CD8-positive, alpha-beta T cell (primary cell): ENCODE measurements at regions of chr7 and their contacts with region 1.

Region 1: DNA sequence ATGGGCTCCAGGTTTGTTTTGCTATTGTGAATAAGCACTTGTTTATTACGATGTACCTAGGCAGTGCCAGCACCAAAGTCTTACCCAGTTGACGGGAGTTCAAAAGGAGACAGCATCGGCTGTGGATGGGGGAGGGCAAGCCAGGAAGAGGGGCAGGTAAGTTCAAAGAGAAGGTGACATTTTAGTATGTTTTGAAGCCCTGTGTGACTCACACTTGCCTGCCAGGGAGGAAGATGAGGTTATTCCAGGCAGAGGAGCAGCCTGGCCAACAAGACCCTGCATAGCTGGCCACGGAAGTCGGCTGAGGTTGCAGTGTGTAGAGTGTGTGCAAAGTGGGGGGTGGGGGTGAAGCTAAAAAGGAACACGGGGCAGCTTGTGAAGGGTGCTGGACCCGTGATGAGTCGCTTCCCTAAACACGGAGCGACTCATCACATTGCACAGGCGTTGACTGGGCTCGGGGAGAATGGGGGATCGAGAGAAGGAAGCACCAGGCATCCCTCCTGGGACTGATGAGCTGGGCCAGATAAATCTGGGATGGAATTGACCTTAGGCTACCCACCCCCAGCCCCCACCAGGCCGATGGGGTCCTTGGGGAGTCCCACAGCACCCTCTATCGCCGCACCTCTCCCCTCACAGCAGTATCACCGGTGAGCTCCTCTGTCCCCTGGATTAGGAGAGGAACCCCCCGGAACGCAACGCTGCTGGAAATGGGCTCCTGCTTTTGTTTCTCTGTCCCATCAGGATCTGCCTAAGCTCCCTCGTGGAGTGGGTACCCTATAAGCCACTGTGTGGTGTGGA is 97.9 kb upstream of the IKZF1 start:
- DNase-seq: peak; percentile 46 to 89 (median 78)
- ATAC-seq: peak; percentile 74
- H3K4me3 ChIP-seq: peak overlapping the region in 1 of 2 experiments; percentile 12
- H3K4me3 Mint-ChIP-seq: peak overlapping the region; percentile 80
- H3K27ac ChIP-seq: peak overlapping the region; percentile 3 to 37
- H3K27ac Mint-ChIP-seq: peak overlapping the region; percentile 92
- H3K4me1 ChIP-seq: peaks cover 74% of the 10 kb centered on the region
- H3K4me1 Mint-ChIP-seq: peaks cover 76% of the 10 kb centered on the region
- H3K27me3 ChIP-seq: no peaks in the 10 kb centered on the region
- H3K27me3 Mint-ChIP-seq: no peaks in the 10 kb centered on the region
- CTCF ChIP-seq: no peak

Region 2: DNA sequence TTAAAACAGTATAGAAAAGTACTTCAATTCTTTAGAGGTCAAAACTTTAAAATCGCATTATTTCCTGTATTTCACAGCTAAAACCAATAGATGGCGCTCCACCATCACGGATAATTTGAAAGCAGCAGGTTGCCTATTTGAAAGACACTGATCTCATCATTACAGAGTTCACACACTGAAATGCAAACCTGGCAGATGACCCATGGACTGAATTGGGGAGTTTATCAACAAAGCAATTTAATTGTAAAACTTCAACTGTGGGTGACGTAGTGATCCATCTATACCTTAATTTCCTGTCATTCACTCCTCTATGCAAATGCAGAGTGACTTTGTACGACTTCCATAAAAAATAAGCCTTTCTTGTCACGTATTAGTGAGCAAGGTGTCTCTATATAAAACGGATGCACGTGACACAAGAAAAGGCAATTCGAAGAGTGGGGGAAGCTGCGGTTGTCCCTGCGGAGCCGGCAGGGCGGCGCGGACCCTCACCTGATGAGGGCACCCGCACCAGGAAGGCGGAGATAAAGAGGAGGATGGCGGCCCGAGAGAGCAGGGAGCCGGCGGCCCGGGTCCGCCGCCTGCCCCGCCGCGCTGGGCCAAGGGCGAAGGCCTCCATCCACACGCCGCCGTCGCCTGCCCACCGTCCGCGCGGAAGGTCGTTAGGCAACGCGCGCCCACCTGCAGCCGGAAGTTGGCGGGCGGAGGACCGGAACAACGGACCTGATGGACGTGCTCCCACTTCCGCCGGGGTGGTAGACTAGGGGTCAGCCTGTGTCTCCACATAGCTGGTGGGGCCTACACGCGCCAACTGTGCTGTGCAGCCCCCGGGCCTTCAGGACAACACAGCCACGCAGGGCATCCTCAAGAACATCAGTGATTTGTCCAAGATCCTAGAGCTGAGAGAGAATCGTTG is 113.8 kb before region 1 on chr7 and contains the start of gene ZPBP:
- CTCF ChIA-PET with region 1: interaction called, 8 read pairs
- POLR2A ChIA-PET with region 1: no interaction called
- intact Hi-C with region 1: loop called in 1 of 2 experiments (anchors 5 kb)
- DNase-seq: peak in 7 of 9 experiments; percentile 42 to 79 (median 54)
- ATAC-seq: peak; percentile 78
- H3K4me3 ChIP-seq: peak within 1 kb of the TSS; percentile 40 to 63
- H3K4me3 Mint-ChIP-seq: peak within 1 kb of the TSS; percentile 92
- H3K27ac ChIP-seq: peak within 1 kb of the TSS; percentile 25 to 51
- H3K27ac Mint-ChIP-seq: peak within 1 kb of the TSS; percentile 86
- H3K4me1 ChIP-seq: peaks cover 4% of the 10 kb centered on the region
- H3K4me1 Mint-ChIP-seq: peaks cover 16% of the 10 kb centered on the region
- H3K27me3 ChIP-seq: no peaks in the 10 kb centered on the region
- H3K27me3 Mint-ChIP-seq: no peaks in the 10 kb centered on the region
- CTCF ChIP-seq: peak; percentile 98
- total RNA-seq, gene ZPBP: not detected

Region 3: GRCh38 chr7:50266635-50267386 is 60.2 kb after region 1 on chr7:
- CTCF ChIA-PET with region 1: interaction called, 53 read pairs
- POLR2A ChIA-PET with region 1: interaction called, 38 read pairs
- intact Hi-C with region 1: loop called (anchors 1 to 2 kb)
- DNase-seq: peak; percentile 44 to 90 (median 82)
- ATAC-seq: peak; percentile 80
- H3K4me3 ChIP-seq: peak overlapping the region; percentile 29 to 31
- H3K4me3 Mint-ChIP-seq: peak overlapping the region; percentile 82
- H3K27ac ChIP-seq: peak overlapping the region; percentile 29 to 74
- H3K27ac Mint-ChIP-seq: peak overlapping the region; percentile 96
- H3K4me1 ChIP-seq: peaks cover 92% of the 10 kb centered on the region
- H3K4me1 Mint-ChIP-seq: peaks cover 98% of the 10 kb centered on the region
- H3K27me3 ChIP-seq: no peaks in the 10 kb centered on the region
- H3K27me3 Mint-ChIP-seq: no peaks in the 10 kb centered on the region
- CTCF ChIP-seq: no peak

Region 4: DNA sequence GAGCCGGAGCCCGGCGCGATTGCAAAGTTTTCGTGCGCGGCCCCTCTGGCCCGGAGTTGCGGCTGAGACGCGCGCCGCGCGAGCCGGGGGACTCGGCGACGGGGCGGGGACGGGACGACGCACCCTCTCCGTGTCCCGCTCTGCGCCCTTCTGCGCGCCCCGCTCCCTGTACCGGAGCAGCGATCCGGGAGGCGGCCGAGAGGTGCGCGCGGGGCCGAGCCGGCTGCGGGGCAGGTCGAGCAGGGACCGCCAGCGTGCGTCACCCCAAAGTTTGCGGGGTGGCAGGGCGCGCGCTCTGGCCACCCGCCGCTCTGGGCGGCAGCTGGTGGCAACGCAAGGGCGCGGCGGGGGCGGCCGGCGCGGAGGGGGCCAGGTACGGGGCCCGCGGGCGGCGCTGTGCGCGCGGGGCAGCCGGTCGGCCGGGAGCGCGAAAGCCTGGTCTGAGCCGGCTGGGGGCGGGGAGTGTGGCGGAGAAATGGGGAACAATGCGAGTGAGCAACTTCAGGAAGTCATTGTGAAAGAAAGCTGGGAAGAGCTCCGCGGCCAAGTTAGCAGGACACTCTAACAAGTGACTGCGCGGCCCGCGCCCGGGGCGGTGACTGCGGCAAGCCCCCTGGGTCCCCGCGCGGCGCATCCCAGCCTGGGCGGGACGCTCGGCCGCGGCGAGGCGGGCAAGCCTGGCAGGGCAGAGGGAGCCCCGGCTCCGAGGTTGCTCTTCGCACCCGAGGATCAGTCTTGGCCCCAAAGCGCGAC is 97.7 kb after region 1 on chr7 and contains the start of gene IKZF1:
- CTCF ChIA-PET with region 1: interaction called, 186 read pairs
- POLR2A ChIA-PET with region 1: interaction called, 102 read pairs
- intact Hi-C with region 1: loop called (anchors 1 to 2 kb)
- DNase-seq: peak; percentile 32 to 82 (median 65)
- ATAC-seq: peak; percentile 39
- H3K4me3 ChIP-seq: peak within 1 kb of the TSS; percentile 90 to 96
- H3K4me3 Mint-ChIP-seq: peak within 1 kb of the TSS; percentile 93
- H3K27ac ChIP-seq: peak within 1 kb of the TSS; percentile 91 to 96
- H3K27ac Mint-ChIP-seq: peak within 1 kb of the TSS; percentile 96
- H3K4me1 ChIP-seq: peaks cover 51% of the 10 kb centered on the region
- H3K4me1 Mint-ChIP-seq: peaks cover 51% of the 10 kb centered on the region
- H3K27me3 ChIP-seq: no peaks in the 10 kb centered on the region
- H3K27me3 Mint-ChIP-seq: no peaks in the 10 kb centered on the region
- CTCF ChIP-seq: no peak
- total RNA-seq, gene IKZF1: 248 TPM

Region 5: DNA sequence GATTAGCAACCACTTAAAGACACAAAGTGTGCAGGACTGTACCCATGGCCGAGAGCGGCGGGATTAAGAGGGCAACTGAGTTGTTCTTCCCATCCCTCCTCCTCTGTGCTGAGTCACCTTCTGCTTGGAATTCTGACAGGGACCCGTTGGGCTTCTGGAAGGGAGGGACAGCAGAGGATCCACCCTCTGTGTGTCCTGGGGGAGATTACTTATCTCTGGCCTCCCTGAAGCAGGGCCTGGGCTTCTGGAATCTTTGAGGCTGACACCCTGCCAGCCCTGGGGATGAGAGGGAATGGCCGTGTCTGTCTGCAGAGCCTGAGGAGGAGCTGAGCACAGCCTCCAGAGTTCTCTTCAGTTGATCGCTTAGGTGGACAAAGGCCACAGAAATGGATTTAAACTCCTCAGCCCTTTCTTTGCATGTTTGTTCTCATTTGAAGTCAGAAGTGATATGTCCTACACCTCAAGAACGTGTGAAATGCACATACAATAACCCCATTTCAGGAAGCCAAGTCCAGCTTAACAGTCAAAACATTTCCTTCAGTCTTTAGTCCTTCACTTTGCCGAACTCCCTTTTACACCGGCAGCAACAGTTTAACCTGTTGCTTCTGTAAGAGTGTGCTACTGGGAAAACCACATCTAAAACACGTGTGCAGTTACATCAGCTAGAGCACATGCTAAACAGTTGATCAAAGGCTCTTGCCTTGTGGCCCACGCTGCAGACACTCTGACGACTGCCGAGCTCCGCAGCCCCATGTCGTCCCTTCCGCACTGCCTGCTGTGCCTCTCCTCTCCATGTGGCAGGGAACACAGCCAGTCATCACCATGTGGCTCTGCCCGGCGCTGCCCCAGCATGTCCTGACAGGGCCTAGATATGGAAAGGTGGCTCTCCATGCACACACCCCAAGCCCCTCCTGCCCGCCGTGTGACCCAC is 153.6 kb after region 1 on chr7:
- CTCF ChIA-PET with region 1: interaction called, 339 read pairs
- POLR2A ChIA-PET with region 1: interaction called, 11 read pairs
- intact Hi-C with region 1: no loop called
- DNase-seq: peak; percentile 62 to 96 (median 82)
- ATAC-seq: peak; percentile 83
- H3K4me3 ChIP-seq: peak overlapping the region in 1 of 2 experiments; percentile 17
- H3K4me3 Mint-ChIP-seq: peak overlapping the region; percentile 76
- H3K27ac ChIP-seq: peak overlapping the region; percentile 78 to 91
- H3K27ac Mint-ChIP-seq: peak overlapping the region; percentile 99
- H3K4me1 ChIP-seq: peaks cover 97% of the 10 kb centered on the region
- H3K4me1 Mint-ChIP-seq: peaks cover 98% of the 10 kb centered on the region
- H3K27me3 ChIP-seq: no peaks in the 10 kb centered on the region
- H3K27me3 Mint-ChIP-seq: no peaks in the 10 kb centered on the region
- CTCF ChIP-seq: no peak

Region 6: GRCh38 chr7:50409856-50410745 is 203.4 kb after region 1 on chr7:
- CTCF ChIA-PET with region 1: interaction called, 153 read pairs
- POLR2A ChIA-PET with region 1: no interaction called
- intact Hi-C with region 1: no loop called
- DNase-seq: peak in 1 of 9 experiments; percentile 42
- ATAC-seq: peak; percentile 53
- H3K4me3 ChIP-seq: peak overlapping the region in 1 of 2 experiments; percentile 16
- H3K4me3 Mint-ChIP-seq: peak overlapping the region; percentile 65
- H3K27ac ChIP-seq: no peak overlapping the region
- H3K27ac Mint-ChIP-seq: peak overlapping the region; percentile 83
- H3K4me1 ChIP-seq: peaks cover 30% of the 10 kb centered on the region
- H3K4me1 Mint-ChIP-seq: peaks cover 65% of the 10 kb centered on the region
- H3K27me3 ChIP-seq: no peaks in the 10 kb centered on the region
- H3K27me3 Mint-ChIP-seq: no peaks in the 10 kb centered on the region
- CTCF ChIP-seq: no peak